Aorta (tissue), 5 donors: ENCODE measurements at regions of chr7 and their contacts with region 1.

Region 1: GRCh38 chr7:128862571-128863432 is at the start of gene ATP6V1F:
- DNase-seq: peak; percentile 98 to 100
- ATAC-seq: peak; percentile 95
- H3K4me3 ChIP-seq: peak within 1 kb of the TSS; percentile 27 to 71
- H3K27ac ChIP-seq: no peak within 1 kb of the TSS
- H3K4me1 ChIP-seq: no peaks in the 10 kb centered on the region
- H3K27me3 ChIP-seq: no peaks in the 10 kb centered on the region
- total RNA-seq, gene ATP6V1F: 83.7 to 84.8 TPM

Region 2: GRCh38 chr7:128843938-128844621 is 18.7 kb before region 1 on chr7:
- intact Hi-C with region 1: loop called in 1 of 2 experiments (anchors 1 kb)
- DNase-seq: peak in 1 of 2 donors; percentile 74
- ATAC-seq: no peak
- H3K4me3 ChIP-seq: no peak overlapping the region
- H3K27ac ChIP-seq: no peak overlapping the region
- H3K4me1 ChIP-seq: no peaks in the 10 kb centered on the region
- H3K27me3 ChIP-seq: no peaks in the 10 kb centered on the region